Mammary epithelial cell (primary cell): ENCODE measurements at regions of chr6 and their contacts with region 1.

Region 1: DNA sequence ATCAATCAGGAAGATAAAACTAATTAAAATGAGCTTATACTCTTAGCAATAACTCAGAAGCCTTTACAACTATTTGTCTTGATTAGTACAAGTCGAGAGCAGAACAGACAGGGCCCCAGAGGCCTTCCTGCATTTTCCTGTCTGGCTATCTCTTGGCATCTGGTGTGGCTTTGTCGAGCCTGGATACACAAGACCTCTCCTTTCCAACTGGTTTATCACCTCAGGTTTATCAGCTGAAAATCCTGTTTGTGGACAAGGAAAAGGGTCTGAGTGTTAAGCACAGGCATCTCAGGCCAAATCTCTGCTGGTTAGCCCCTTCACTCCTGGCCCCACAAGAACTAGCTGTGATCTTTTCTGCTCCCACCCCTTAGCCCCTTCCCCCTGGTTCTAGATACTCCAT is 32.6 kb downstream of the BAK1 start:
- DNase-seq: no peak
- H3K4me3 ChIP-seq: no peak overlapping the region
- H3K27ac ChIP-seq: no peak overlapping the region
- H3K4me1 ChIP-seq: peaks cover 4% of the 10 kb centered on the region
- H3K27me3 ChIP-seq: no peaks in the 10 kb centered on the region
- CTCF ChIP-seq: no peak

Region 2: GRCh38 chr6:33467091-33467490 is 80.4 kb before region 1 on chr6:
- CTCF ChIA-PET with region 1: no interaction called
- dilution Hi-C with region 1: loop called (anchors 5 kb)
- in situ Hi-C with region 1: no loop called
- intact Hi-C with region 1: no loop called
- DNase-seq: no peak
- H3K4me3 ChIP-seq: no peak overlapping the region
- H3K27ac ChIP-seq: no peak overlapping the region
- H3K4me1 ChIP-seq: no peaks in the 10 kb centered on the region
- H3K27me3 ChIP-seq: no peaks in the 10 kb centered on the region
- CTCF ChIP-seq: no peak

Region 3: DNA sequence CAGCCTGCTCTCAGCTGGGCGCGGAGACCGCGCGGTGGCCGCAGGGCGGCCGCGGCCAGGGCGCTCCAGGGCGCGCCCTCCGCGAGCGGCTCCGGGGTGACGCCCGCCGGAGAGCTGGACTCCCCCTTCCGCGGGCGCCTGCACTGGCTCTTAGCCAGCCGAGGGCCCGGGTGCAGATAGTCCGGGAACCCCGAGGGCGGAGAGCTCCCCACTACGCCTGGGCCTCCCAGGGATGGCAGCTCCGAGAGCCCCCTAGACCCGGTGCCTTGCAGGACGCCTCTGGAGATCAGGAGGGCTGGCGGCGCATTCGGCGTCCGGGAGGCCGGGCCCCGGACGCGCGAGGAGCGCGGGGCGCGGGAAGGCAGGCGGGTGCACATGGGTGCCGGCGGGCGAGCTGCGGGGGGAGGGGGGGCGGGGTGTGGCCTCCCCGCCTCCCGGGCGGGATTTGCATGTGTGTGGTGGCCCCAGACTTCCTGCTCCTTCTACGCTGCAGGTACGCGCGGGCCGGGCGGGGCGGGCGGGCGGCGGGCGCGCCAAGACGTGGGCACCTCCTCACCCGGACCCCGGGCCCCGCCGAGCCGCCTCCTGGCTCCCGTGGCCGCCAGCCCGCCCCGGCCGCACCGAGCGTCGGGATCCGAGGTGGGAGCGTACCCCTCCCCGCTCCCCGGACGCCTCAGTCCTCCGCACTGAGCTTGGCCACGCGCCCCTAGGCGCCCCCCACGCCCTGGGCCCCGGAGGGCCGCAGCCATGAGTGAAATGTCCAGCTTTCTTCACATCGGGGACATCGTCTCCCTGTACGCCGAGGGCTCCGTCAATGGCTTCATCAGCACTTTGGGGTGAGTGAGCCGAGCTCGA is 73.6 kb after region 1 on chr6 and contains the start of gene ITPR3:
- CTCF ChIA-PET with region 1: interaction called, 11 read pairs
- dilution Hi-C with region 1: no loop called
- in situ Hi-C with region 1: no loop called
- intact Hi-C with region 1: no loop called
- DNase-seq: peak; percentile 83
- H3K4me3 ChIP-seq: peak within 1 kb of the TSS; percentile 61 to 83 (median 80)
- H3K27ac ChIP-seq: peak within 1 kb of the TSS; percentile 77
- H3K4me1 ChIP-seq: peaks cover 34% of the 10 kb centered on the region
- H3K27me3 ChIP-seq: no peaks in the 10 kb centered on the region
- CTCF ChIP-seq: no peak
- total RNA-seq, gene ITPR3: 125 to 155 TPM

Region 4: GRCh38 chr6:33654831-33655554 is 107.5 kb after region 1 on chr6:
- CTCF ChIA-PET with region 1: no interaction called
- dilution Hi-C with region 1: loop called (anchors 5 kb)
- in situ Hi-C with region 1: no loop called
- intact Hi-C with region 1: no loop called
- DNase-seq: no peak
- H3K4me3 ChIP-seq: no peak overlapping the region
- H3K27ac ChIP-seq: no peak overlapping the region
- H3K4me1 ChIP-seq: no peaks in the 10 kb centered on the region
- H3K27me3 ChIP-seq: no peaks in the 10 kb centered on the region
- CTCF ChIP-seq: no peak